ENCODE measurements at regions of chr6 and their contacts with region 1.

Region 1: DNA sequence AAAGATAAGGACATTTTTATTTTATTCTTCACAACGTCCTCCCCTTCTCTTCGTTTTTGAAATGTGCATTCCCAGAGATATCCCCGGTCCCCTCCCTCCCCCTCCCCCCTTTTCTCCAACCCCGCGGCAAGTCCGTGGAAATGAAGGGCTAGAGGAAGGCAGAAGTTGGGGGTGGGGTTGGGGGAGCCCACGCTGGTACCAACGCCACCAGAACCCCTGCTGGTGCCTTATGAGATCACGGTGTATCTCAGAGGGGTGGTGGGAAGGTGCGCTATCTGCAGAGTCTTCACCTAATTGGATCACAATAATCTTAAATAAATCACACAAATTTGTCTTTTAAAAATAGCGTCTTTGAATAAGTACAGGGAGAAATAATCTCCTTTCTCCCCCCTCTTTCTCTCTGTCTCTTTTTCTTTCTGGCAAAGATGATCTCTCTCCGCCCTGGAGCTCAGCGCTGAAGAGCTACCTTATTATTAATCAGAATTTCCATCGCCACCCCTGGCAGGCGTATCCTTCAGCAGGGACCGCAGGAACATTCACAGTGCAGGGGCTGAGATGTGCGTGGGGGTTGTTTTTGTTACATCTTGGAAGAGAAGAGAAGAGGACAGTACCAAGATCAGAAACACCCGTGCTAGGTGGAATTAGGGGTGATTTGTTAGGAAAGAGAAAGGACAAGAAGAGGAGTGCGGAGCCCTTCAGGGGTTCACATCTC is 915 bp downstream of the CLVS2 start:
- DNase-seq: no peak
- ATAC-seq: no peak

Region 2: DNA sequence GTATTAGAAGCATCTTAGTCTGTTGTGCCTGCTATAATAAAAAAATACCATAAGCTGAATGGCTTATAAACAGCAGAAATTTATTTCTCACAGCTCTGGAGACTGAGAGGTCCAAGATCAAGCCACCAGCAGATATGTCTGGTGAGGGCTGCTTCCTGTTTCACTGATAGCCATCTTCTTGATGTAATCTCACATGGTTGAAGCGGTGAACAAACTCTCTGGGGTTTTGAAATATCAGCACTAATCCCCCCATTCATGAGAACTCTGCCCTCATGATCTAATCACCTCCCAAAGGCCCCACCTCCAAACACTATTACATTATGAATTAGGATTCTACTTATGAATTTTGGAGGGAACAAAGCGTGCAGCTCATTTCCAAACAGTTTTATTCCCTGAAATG is 12.6 kb before region 1 on chr6:
- intact Hi-C with region 1: loop called (anchors 2 kb)
- DNase-seq: no peak
- ATAC-seq: no peak

Region 3: GRCh38 chr6:123972600-123973294 is 975.8 kb after region 1 on chr6:
- intact Hi-C with region 1: no loop called
- DNase-seq: no peak
- ATAC-seq: no peak